ENCODE measurements at regions of chr10 and their contacts with region 1.

Region 1: DNA sequence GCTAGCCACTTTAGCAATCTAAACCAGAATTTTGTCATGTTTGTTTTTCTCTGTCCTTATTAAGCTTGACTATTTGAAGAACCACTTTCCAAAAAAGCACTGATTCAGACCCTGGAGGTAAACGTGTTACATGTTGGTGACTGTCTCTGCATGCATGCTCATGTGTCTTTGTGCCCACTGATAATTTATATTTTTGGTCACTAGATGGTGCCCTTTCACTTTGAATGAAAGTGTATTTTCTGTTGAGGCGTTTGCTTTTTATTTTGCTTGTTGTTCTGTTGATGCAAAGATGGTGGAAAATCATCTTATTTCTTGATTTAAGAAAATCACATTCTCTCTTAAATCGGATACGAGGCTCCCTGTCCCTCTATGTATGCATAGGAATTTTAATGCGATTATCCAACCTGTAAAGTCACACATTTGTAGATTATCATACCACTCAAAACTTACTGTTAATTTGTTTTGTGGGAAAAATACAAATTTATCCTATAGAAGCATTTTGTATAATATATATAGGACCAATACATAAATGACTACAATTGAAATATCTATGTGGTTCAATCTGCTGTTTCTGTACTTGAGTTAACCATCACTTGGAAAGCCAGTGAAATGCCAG is 269.3 kb downstream of the BICC1 start:
- DNase-seq: peak; percentile 42
- ATAC-seq: peak; percentile 72
- H3K4me3 ChIP-seq: no peak overlapping the region
- H3K27ac ChIP-seq: no peak overlapping the region
- H3K4me1 ChIP-seq: peaks cover 8% of the 10 kb centered on the region; the same call in 1 of the 2 replicates
- H3K27me3 ChIP-seq: no peaks in the 10 kb centered on the region
- CTCF ChIP-seq: peak; percentile 75
- EP300 ChIP-seq: no peak
- POLR2A ChIP-seq: no peak
- RAD21 ChIP-seq: peak; percentile 39; the same call in 1 of the 2 replicates

Region 2: GRCh38 chr10:58531084-58531695 is 250.8 kb before region 1 on chr10:
- CTCF ChIA-PET with region 1: no interaction called
- POLR2A ChIA-PET with region 1: no interaction called
- in situ Hi-C with region 1: no loop called
- intact Hi-C with region 1: loop called (anchors 1 kb)
- DNase-seq: peak; percentile 65
- ATAC-seq: peak; percentile 89
- H3K4me3 ChIP-seq: no peak overlapping the region
- H3K27ac ChIP-seq: no peak overlapping the region
- H3K4me1 ChIP-seq: no peaks in the 10 kb centered on the region
- H3K27me3 ChIP-seq: no peaks in the 10 kb centered on the region
- CTCF ChIP-seq: peak; percentile 77
- EP300 ChIP-seq: no peak
- POLR2A ChIP-seq: no peak
- RAD21 ChIP-seq: peak; percentile 41

Region 3: GRCh38 chr10:58894929-58895328 is 112.9 kb after region 1 on chr10:
- CTCF ChIA-PET with region 1: no interaction called
- POLR2A ChIA-PET with region 1: no interaction called
- in situ Hi-C with region 1: no loop called
- intact Hi-C with region 1: no loop called
- DNase-seq: peak; percentile 61
- ATAC-seq: peak; percentile 94
- H3K4me3 ChIP-seq: no peak overlapping the region
- H3K27ac ChIP-seq: no peak overlapping the region
- H3K4me1 ChIP-seq: peaks cover 25% of the 10 kb centered on the region
- H3K27me3 ChIP-seq: no peaks in the 10 kb centered on the region
- CTCF ChIP-seq: peak; percentile 68
- EP300 ChIP-seq: no peak
- POLR2A ChIP-seq: no peak
- RAD21 ChIP-seq: peak; percentile 39; the same call in 1 of the 2 replicates

Region 4: GRCh38 chr10:59240582-59241183 is 458.7 kb after region 1 on chr10:
- CTCF ChIA-PET with region 1: no interaction called
- POLR2A ChIA-PET with region 1: no interaction called
- in situ Hi-C with region 1: no loop called
- intact Hi-C with region 1: loop called (anchors 5 kb)
- DNase-seq: peak; percentile 25
- ATAC-seq: no peak
- H3K4me3 ChIP-seq: no peak overlapping the region
- H3K27ac ChIP-seq: no peak overlapping the region
- H3K4me1 ChIP-seq: no peaks in the 10 kb centered on the region
- H3K27me3 ChIP-seq: no peaks in the 10 kb centered on the region
- CTCF ChIP-seq: peak; percentile 53
- EP300 ChIP-seq: no peak
- POLR2A ChIP-seq: no peak
- RAD21 ChIP-seq: no peak

Region 5: DNA sequence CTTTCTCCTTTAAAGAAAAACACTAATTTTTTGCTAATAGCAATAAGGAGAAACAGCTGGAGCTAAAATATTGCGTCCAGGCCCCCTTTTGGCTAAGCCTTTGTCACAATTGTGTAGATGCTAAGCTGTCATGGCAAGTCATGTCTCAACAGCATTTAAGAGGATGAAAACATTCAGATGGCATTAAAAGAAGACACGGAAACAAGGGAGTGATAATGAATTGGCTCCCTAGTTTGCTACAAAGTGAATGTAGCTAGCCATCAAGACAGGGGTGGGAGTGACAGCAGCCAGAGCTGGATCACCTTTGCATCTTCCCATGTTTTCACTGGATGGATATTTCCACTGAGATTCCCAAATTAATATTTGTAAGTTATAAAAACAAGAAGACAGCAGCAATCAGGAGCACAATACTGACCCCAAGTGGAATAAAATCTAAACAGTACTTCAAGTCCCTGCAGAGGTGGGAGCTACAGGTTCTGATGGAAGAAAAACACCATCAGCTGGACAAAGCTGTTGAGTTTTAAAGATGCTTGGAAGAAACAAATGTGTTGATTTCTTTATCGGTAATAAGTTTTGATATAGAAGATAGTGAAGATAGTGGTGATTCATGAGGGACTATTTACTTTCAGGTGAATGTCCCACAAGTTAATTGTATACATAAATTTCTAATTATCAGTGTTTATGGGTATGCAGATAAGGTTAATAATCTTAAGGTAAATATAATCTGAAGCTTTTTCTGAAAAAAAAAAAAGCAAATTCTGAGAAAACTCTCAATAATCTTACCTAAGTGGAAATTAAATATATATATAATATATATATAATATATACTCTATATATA is 798.3 kb after region 1 on chr10:
- CTCF ChIA-PET with region 1: no interaction called
- POLR2A ChIA-PET with region 1: no interaction called
- in situ Hi-C with region 1: no loop called
- intact Hi-C with region 1: loop called (anchors 1 kb)
- DNase-seq: peak; percentile 3
- ATAC-seq: no peak
- H3K4me3 ChIP-seq: no peak overlapping the region
- H3K27ac ChIP-seq: no peak overlapping the region
- H3K4me1 ChIP-seq: no peaks in the 10 kb centered on the region
- H3K27me3 ChIP-seq: no peaks in the 10 kb centered on the region; a peak in 2 of 5 replicates
- CTCF ChIP-seq: peak; percentile 44
- EP300 ChIP-seq: no peak
- POLR2A ChIP-seq: no peak
- RAD21 ChIP-seq: no peak

Region 6: DNA sequence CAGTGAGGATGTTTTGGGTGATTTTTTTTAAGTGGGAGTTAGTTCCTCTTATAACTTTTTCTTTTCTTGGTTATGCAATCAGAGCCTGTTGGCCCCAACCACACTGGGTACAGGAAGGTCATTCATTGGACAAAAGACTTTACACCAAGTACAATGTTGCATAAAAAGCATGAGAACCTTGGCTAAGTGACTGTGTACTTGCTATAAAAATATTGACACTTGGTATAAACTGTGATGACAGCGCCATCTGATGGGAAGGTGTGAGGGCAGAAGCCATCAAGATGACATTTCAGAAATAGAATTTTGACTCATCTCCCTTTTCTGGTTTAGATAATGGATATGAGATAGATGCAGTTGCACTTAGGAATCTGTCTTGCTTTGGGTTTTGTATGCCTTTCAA is 1250.7 kb after region 1 on chr10:
- CTCF ChIA-PET with region 1: no interaction called
- POLR2A ChIA-PET with region 1: no interaction called
- in situ Hi-C with region 1: loop called (anchors 25 kb)
- intact Hi-C with region 1: no loop called
- DNase-seq: peak; percentile 62
- ATAC-seq: peak; percentile 77
- H3K4me3 ChIP-seq: no peak overlapping the region
- H3K27ac ChIP-seq: no peak overlapping the region
- H3K4me1 ChIP-seq: no peaks in the 10 kb centered on the region
- H3K27me3 ChIP-seq: no peaks in the 10 kb centered on the region
- CTCF ChIP-seq: peak; percentile 71
- EP300 ChIP-seq: no peak
- POLR2A ChIP-seq: no peak
- RAD21 ChIP-seq: peak; percentile 36; the same call in 1 of the 2 replicates

Measured in HepG2 (cell line).